CD4-positive, alpha-beta memory T cell (primary cell): ENCODE measurements at regions of chr1 and their contacts with region 1.

Region 1: GRCh38 chr1:201149400-201149799 is 4.9 kb downstream of the TMEM9 start:
- DNase-seq: peak in 1 of 5 donors; percentile 14
- H3K4me3 ChIP-seq: no peak overlapping the region
- H3K4me3 Mint-ChIP-seq: no peak overlapping the region
- H3K27ac ChIP-seq: no peak overlapping the region
- H3K27ac Mint-ChIP-seq: no peak overlapping the region
- H3K4me1 ChIP-seq: peaks cover 15% of the 10 kb centered on the region
- H3K4me1 Mint-ChIP-seq: peaks cover 13 to 20% (median 16%) of the 10 kb centered on the region in 4 donors
- H3K27me3 ChIP-seq: no peaks in the 10 kb centered on the region
- H3K27me3 Mint-ChIP-seq: no peaks in the 10 kb centered on the region

Region 2: DNA sequence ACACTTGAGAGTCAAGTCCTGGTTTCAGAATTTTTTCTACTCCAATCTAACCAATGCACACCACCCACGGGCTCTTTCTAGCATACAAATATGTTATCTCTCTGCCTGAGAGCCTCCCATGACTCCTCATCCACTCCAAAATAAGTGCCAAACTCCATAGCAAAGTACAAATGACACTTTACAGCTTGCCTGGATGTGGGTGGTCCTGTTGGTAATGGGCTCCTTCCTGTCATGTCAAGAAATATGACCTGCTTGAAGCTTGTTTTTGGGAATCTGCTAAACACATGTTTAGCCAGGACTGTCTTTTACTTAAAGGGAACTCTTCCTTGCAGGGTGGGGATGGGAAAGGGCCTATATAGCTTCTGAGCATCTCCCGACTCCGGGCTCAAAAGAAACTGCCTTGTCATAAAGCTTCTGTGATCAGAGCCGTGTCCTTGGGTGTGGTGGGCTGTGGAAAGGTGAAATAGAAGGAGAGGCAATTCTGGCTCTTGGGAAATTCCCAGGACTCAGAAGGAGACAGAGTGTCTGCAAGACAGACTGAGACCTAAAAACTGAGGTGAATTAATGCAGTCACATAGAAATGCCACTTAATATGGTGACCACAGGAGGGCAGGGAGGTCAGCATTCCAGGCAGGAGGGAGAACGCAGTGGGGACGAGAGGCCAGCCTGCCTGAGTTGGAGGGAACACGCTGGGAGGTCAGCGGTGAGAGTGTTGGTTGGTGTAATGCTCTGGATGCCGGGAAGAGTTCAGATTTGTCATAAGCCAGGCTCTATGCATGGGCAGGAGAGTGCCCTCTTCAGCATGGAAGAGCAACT is 35.1 kb after region 1 on chr1:
- CTCF ChIA-PET with region 1: no interaction called
- POLR2A ChIA-PET with region 1: no interaction called
- intact Hi-C with region 1: loop called (anchors 5 kb)
- DNase-seq: no peak
- H3K4me3 ChIP-seq: no peak overlapping the region
- H3K4me3 Mint-ChIP-seq: no peak overlapping the region
- H3K27ac ChIP-seq: no peak overlapping the region
- H3K27ac Mint-ChIP-seq: no peak overlapping the region
- H3K4me1 ChIP-seq: no peaks in the 10 kb centered on the region
- H3K4me1 Mint-ChIP-seq: no peaks in the 10 kb centered on the region
- H3K27me3 ChIP-seq: no peaks in the 10 kb centered on the region
- H3K27me3 Mint-ChIP-seq: peaks cover 8 to 23% of the 10 kb centered on the region in 2 donors

Region 3: DNA sequence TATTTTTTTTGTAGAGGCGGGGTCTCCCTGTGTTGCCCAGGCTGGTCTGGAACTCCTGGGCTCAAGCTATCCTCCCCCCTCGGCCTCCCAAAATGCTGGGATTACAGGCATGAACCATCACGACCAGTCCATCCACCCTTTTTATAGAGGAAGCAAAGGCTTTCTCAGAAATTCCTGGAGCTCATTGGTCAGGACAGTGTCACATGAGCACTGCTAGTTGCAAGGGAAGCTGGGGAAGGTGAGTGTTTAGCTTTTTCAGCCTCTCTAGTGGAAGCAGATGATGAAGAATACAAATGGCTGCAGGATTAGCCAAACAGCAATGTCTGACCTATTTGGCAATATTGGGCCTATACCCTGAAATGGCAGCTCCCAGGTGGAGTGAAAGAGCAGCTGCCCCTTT is 49.2 kb after region 1 on chr1:
- CTCF ChIA-PET with region 1: no interaction called
- POLR2A ChIA-PET with region 1: no interaction called
- intact Hi-C with region 1: no loop called
- DNase-seq: no peak
- H3K4me3 ChIP-seq: no peak overlapping the region
- H3K4me3 Mint-ChIP-seq: no peak overlapping the region
- H3K27ac ChIP-seq: no peak overlapping the region
- H3K27ac Mint-ChIP-seq: no peak overlapping the region
- H3K4me1 ChIP-seq: no peaks in the 10 kb centered on the region
- H3K4me1 Mint-ChIP-seq: no peaks in the 10 kb centered on the region
- H3K27me3 ChIP-seq: no peaks in the 10 kb centered on the region
- H3K27me3 Mint-ChIP-seq: peaks cover 0 to 1% of the 10 kb centered on the region in 2 donors

Region 4: DNA sequence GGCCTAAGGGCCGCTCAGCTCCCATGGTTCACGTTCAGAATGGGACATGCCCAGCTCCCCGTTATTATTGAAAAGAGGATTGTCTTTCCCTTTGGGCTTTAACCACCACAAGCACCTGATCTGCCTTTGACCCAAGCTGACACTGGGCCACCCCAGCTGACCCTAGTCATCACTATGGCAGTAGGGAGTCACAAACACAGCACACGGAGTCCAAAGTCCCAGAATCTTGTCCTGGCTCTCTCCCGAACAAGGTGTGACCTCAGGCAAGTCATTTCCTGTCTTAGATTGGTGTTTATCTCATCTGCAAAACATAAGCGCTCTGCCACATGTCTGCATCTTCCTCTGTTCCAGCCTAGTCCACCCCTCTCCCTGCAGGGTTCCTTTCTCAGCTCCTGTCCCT is 72.7 kb after region 1 on chr1:
- CTCF ChIA-PET with region 1: interaction called, 4 read pairs
- POLR2A ChIA-PET with region 1: no interaction called
- intact Hi-C with region 1: loop called (anchors 1 kb)
- DNase-seq: no peak
- H3K4me3 ChIP-seq: no peak overlapping the region
- H3K4me3 Mint-ChIP-seq: no peak overlapping the region
- H3K27ac ChIP-seq: no peak overlapping the region
- H3K27ac Mint-ChIP-seq: no peak overlapping the region
- H3K4me1 ChIP-seq: no peaks in the 10 kb centered on the region
- H3K4me1 Mint-ChIP-seq: no peaks in the 10 kb centered on the region
- H3K27me3 ChIP-seq: no peaks in the 10 kb centered on the region
- H3K27me3 Mint-ChIP-seq: peaks cover 2 to 3% of the 10 kb centered on the region in 2 donors